HepG2 (cell line): ENCODE measurements at regions of chr1 and their contacts with region 1.

Region 1: DNA sequence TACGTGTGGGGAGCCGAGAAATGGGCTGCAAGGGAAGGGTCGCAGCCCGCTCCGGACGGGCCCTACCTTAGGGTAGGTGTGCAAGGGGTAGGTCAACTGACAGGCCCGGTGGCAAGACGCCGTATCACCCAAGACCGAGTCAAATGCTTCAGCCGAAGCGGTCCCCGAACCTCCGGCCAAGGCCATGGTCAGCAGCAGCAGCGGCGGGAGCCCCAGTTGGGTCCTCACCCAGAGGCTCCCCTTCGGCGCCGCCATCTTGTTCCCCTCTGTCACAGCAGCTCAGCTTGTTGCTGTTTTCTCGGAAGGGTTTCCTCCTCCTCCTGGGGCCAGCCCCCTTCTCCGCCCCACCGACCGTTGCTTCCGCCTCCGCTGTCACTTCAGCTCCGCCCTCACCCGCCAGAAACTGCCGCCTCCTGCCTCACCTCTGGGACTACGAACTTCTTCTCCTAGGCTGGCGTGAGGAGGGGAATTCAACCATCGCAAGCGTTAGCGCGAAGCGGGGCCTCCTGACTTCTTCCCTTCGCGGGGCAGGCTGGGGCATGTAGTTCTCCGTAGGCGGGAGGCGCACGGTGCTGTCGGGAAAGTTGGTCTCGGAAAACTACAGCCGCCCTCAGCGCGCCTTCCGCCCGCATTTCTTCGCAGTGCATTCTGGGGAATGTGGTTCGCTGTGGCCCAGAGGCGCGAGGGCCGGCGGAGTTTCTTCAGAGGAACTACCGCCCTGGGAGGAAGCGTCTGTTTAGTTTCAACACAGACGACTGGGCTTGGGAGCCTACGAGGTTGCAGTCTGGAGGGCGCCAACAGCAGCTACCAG is at the starts of genes TCEANC2 and TMEM59:
- DNase-seq: peak; percentile 96
- ATAC-seq: peak; percentile 97
- H3K4me3 ChIP-seq: peak within 1 kb of the TSS; percentile 76 to 98 (median 91)
- H3K27ac ChIP-seq: peak within 1 kb of the TSS; percentile 80
- H3K4me1 ChIP-seq: peaks cover 23% of the 10 kb centered on the region
- H3K27me3 ChIP-seq: no peaks in the 10 kb centered on the region; a peak in 1 of 5 replicates
- CTCF ChIP-seq: no peak; the same call in 1 of the 2 replicates
- EP300 ChIP-seq: no peak
- POLR2A ChIP-seq: peak; percentile 21 to 74; a peak in 3 of 4 replicates
- RAD21 ChIP-seq: 0 out of 2 replicates have a peak, but pooled peaks have one; percentile 21
- total RNA-seq, gene TCEANC2: 5.0 and 6.1 TPM in 2 replicates
- total RNA-seq, gene TMEM59: 98.2 and 147 TPM in 2 replicates

Region 2: DNA sequence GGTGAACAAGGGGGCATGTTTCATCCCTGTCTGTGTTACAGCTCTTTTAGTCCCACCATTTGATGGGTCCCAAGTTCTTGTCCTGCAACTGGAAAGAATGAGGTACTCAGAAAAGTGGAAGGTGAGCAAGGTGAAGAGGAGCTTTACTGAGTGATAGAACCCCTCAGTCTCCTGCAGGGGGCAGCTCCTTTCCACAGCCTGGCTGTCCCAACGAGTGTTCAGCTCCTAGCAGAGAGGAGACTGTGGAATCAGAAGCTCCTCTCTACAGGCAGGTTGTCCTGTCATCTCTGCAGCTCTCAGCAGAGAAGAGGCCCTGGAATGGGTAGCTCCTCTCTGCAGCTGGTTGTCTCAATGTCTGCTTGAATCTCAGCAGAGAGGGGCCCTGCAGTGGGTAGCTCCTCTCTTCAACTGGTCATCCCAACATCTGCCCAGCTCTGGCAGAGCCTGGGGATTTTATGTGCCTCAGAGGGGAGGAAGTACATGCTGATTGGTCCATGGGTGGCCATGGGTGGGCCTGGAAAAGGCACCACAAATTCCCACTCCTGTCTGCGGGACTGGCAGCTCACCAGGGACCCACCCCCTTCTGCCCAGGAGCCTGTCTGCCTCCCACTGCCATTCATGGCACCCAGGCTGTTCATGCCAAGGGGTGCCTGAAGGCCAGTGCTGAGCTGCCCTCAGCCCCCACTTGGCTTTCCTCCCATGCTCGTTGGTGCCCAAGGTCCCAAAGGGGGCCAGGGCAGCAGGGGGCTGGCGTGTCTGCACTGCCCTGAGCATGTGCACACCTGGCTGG is 60.9 kb before region 1 on chr1:
- CTCF ChIA-PET with region 1: no interaction called
- POLR2A ChIA-PET with region 1: interaction called, 12 read pairs
- in situ Hi-C with region 1: no loop called
- intact Hi-C with region 1: loop called (anchors 2 kb)
- DNase-seq: peak; percentile 75
- ATAC-seq: peak; percentile 100
- H3K4me3 ChIP-seq: no peak overlapping the region; a peak in 1 of 6 replicates
- H3K27ac ChIP-seq: no peak overlapping the region
- H3K4me1 ChIP-seq: no peaks in the 10 kb centered on the region
- H3K27me3 ChIP-seq: no peaks in the 10 kb centered on the region
- CTCF ChIP-seq: peak; percentile 93
- EP300 ChIP-seq: no peak
- POLR2A ChIP-seq: no peak
- RAD21 ChIP-seq: peak; percentile 87

Region 3: DNA sequence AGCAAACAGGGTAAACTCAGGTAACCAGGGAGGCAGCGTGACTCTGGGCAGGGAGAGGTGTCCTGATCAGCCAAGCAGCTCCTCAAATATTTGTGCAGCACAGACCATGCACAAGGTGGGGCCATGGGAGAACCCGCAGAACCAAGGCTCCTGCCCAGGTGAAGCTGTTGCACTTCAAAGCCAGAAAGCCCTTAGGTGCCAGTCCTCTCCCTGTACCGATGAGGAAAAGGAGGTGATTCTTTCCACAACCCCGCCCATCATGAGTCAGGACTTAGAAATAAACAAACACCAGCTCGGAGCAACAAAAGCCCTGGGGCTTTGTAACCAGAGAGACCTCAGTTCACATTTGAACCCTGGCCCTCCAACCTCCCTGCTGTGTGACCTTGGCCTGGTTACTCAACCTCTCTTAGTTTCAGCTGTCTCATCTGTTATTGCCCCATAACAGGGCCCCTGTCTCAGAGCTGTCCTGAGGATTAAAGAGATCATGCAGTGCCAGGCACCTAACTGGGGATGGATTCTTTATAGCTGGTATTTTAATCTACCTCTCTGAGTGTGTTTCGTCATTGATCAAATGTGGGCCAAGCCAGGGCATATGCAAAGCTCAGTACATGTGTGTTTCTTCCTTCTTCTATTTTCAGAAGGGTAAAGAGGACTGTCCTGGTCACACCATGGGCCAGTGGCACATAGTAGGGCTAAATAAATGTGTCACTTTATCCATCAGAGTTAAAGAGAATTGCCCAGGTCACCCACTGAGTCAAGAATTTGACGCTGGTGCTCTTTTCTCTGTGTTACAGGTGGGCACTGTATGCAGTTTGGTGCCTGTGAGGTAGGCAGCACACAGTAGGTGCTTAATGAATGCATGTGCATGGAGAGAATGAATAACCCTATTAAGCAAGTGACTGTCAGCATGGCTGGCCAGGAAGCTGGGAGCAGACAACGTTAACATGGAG is 36.6 kb before region 1 on chr1:
- CTCF ChIA-PET with region 1: no interaction called
- POLR2A ChIA-PET with region 1: interaction called, 42 read pairs
- in situ Hi-C with region 1: no loop called
- intact Hi-C with region 1: loop called (anchors 1 kb)
- DNase-seq: peak; percentile 96
- ATAC-seq: peak; percentile 67
- H3K4me3 ChIP-seq: peak overlapping the region; percentile 49 to 69 (median 51); a peak in 5 of 6 replicates
- H3K27ac ChIP-seq: peak overlapping the region; percentile 74
- H3K4me1 ChIP-seq: peaks cover 86% of the 10 kb centered on the region
- H3K27me3 ChIP-seq: no peaks in the 10 kb centered on the region
- CTCF ChIP-seq: 0 out of 2 replicates have a peak, but pooled peaks have one; percentile 15
- EP300 ChIP-seq: peak; percentile 80 to 93
- POLR2A ChIP-seq: peak in 1 of 2 experiments; percentile 58; a peak in 2 of 4 replicates
- RAD21 ChIP-seq: no peak; the same call in 1 of the 2 replicates

Region 4: DNA sequence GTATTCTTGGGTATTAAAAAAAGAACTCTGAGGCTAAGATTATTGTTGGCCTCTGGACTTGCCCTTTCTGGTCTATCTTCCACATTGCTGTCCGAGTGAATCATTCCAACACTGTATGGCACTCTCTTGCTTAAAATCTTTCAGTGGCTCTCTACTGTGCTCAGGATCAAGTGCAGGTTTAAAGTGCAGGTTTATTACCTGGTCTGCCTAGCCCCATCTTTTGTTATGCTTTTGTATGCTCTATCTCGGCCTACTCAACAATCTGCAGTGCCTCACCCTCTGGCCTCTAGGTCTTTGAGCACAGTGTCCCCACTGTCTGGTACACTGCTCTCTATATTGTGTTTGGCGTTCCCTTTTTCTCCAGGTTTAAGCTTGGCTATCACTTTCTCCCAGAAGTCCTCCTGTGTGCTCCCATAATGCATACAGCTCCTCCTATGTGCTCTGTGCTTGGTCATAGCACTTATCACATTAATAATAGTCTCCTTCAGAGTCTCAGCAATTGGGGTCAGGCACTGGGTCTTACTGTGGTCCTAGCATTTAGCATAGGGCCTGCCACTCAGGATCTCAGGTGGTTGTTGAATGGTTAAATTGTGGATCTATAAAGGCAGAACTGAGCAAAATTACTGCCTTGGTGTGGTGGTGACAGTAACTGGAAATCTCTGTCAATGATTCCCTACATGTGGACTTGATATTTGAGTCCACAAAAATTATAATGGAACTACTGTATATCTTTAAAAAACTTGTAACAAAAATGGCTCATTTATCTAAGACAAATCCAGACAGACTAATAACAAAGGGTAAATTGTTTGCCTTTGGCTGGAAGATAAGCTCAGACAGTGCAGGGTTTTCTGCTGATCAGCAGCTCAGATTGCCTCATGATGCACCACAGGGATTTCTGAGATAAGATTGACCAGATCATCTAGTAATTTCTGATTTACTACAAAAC is 24.6 kb before region 1 on chr1:
- CTCF ChIA-PET with region 1: no interaction called
- POLR2A ChIA-PET with region 1: interaction called, 12 read pairs
- in situ Hi-C with region 1: no loop called
- intact Hi-C with region 1: no loop called
- DNase-seq: peak; percentile 80
- ATAC-seq: peak; percentile 83
- H3K4me3 ChIP-seq: peak overlapping the region; percentile 4 to 43 (median 23)
- H3K27ac ChIP-seq: peak overlapping the region; percentile 62
- H3K4me1 ChIP-seq: peaks cover 38% of the 10 kb centered on the region
- H3K27me3 ChIP-seq: no peaks in the 10 kb centered on the region
- CTCF ChIP-seq: no peak
- EP300 ChIP-seq: peak in 1 of 2 experiments; percentile 6; a peak in 1 of 4 replicates
- POLR2A ChIP-seq: no peak
- RAD21 ChIP-seq: no peak

Region 5: DNA sequence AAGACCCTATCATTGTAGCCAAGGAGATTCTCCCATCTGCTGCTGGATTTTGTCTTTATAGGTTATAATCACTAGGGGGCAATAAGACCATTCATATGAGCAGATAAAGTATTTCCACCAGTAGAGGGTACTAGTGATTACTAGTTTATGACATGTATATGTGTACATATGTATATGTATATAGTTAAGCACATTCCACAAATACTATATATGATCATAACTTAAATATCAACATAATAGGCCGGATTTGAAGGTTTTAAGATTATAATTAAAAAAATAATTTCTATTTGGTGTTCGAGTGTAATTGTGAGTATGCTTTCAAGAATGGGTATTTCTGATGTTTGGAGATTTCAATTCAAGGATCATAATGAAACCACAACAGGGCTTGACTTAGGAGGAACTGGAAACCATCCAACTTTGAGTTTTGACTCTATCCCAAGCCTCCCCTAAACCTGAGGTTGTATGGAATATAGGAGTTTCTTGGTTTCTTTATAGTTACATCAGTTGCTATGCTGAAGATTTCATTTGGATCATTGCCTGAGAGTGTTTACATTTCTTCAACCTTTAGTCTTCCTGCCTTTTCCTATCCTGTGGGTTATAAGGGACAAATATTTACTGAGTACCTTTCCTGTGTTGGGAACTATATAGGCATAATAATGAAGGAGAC is 17.2 kb after region 1 on chr1:
- CTCF ChIA-PET with region 1: no interaction called
- POLR2A ChIA-PET with region 1: interaction called, 3 read pairs
- in situ Hi-C with region 1: no loop called
- intact Hi-C with region 1: loop called (anchors 2 kb)
- DNase-seq: peak; percentile 71
- ATAC-seq: peak; percentile 89
- H3K4me3 ChIP-seq: peak overlapping the region in 2 of 3 experiments; percentile 39 to 42; a peak in 2 of 6 replicates
- H3K27ac ChIP-seq: peak overlapping the region; percentile 57
- H3K4me1 ChIP-seq: peaks cover 25% of the 10 kb centered on the region
- H3K27me3 ChIP-seq: no peaks in the 10 kb centered on the region
- CTCF ChIP-seq: peak; percentile 74
- EP300 ChIP-seq: peak in 1 of 2 experiments; percentile 74; a peak in 2 of 4 replicates
- POLR2A ChIP-seq: no peak
- RAD21 ChIP-seq: peak; percentile 69

Region 6: DNA sequence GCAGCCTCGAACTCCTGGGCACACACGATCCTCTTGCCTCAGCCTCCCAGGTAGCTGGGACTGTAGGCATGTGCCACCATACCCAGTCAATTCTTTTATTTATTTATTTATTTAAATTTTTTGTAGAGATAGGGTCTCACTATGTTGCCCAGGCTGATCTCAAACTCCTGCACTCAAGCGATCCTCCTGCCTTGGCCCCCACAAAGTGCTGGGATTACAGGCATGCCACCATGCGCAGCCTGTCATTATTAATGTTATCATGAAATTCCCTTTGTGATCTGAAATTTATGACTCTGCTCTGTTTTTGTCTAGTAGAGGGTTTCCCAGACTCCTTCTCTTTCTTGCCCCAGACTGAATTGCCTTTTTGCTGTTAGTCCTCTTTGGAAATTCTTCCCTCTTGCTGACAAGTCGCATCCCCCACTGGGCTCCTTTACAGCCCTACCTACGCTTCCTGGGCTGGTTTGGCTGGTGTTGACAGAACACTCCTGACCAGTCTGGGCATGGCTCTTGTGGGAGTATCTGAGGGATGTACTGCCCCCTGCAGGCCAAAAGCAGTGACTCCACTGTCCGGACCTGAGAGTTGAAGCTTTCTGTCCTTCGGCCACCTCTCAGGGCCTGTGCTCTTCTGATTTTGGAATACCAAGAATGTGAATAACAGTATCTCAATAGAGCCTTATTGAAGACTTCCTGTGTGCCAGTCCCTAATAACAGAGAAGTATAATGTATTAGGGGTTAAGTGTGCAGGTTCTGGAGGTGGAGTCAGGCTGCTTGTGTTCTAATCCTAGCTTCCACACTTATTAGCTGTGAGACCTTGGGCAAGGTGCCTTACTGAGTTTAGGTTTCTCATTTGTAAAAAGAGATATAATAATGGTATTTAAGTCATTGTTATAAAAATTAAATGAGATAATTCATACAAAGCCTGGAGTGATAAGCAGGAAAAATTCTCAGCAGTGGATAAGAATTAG is 28.4 kb after region 1 on chr1:
- CTCF ChIA-PET with region 1: no interaction called
- POLR2A ChIA-PET with region 1: interaction called, 15 read pairs
- in situ Hi-C with region 1: no loop called
- intact Hi-C with region 1: loop called (anchors 1 kb)
- DNase-seq: peak; percentile 87
- ATAC-seq: peak; percentile 98
- H3K4me3 ChIP-seq: no peak overlapping the region
- H3K27ac ChIP-seq: peak overlapping the region; percentile 61
- H3K4me1 ChIP-seq: peaks cover 53% of the 10 kb centered on the region
- H3K27me3 ChIP-seq: no peaks in the 10 kb centered on the region
- CTCF ChIP-seq: peak; percentile 95
- EP300 ChIP-seq: no peak
- POLR2A ChIP-seq: no peak
- RAD21 ChIP-seq: peak; percentile 88

Region 7: DNA sequence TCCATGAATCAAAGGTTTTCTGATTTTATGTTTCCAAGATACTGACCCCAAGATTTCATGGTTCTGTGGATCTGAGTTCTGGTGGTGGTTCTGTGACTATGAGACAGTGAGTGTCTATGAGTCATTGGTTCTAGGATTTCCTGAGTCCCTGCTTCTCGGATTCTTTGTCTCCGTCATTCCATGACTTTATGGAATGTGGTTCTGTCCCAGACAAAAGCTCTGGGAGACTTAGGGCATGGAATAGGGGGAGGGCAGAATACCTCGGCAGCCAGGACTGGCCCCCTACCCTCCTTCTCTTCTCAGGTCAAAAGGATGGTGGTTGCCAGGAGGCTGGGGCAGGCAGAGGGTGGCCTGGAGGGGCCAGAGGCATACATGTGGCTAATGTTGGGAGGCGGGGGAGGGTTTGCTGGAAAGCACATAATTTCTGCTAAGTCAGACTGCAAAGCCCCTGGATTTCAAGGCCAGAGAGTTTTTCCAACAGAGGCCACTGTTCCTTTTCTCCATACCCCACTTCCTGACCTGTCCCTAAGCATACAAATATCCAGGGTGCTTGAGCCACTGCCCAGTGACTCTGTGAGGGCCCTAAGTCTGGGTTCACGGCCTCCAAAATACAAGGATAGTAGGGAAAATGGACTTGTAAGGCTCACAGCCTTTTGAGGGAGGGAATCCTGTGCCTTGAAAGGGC is 82.4 kb after region 1 on chr1:
- CTCF ChIA-PET with region 1: no interaction called
- POLR2A ChIA-PET with region 1: no interaction called
- in situ Hi-C with region 1: no loop called
- intact Hi-C with region 1: no loop called
- DNase-seq: peak; percentile 38
- ATAC-seq: peak; percentile 67
- H3K4me3 ChIP-seq: peak overlapping the region in 1 of 3 experiments; percentile 45; a peak in 1 of 6 replicates
- H3K27ac ChIP-seq: no peak overlapping the region
- H3K4me1 ChIP-seq: peaks cover 27% of the 10 kb centered on the region
- H3K27me3 ChIP-seq: peaks cover 0 to 10% of the 10 kb centered on the region in 2 experiments; a peak in 2 of 5 replicates
- CTCF ChIP-seq: no peak
- EP300 ChIP-seq: no peak
- POLR2A ChIP-seq: no peak
- RAD21 ChIP-seq: no peak